ENCODE measurements at regions of chr19 and their contacts with region 1.

Region 1: DNA sequence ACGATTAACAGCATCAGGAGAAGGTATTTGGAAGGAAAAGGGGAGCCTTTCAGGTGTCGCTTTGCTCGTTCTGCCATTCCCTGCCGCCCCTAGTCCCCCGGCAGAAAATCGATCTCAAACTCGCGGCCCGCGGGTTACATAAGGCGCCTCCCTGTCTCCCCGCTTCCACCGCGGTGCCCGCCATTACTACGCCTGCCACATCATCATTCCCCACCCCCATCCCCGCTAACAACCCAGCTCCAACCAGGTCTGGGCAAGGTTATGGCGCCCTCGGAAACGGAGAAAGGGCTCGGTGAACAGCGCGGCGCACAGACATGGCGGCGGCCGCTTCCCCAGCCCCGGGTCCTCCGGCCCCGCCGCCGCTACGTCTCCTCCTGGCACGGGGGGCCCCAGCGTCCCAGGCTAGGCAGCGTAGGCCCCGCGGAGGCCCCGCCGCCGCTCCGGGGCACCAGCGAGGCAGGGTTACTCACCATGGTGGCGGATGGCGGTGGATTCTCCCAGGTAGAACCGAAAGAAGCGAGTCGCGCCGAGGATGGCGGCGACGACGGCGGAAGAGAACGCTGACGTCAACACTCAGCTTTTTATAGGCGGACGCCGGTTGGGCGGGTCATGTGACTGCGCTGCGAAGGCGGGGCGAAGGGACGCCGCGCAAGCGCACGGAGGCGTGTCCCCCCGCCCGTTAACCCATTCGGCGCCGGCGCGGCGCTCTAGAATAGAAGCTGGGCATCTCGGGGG is at the start of gene EEF2:
- DNase-seq: peak; percentile 84 to 97 (median 92)
- ATAC-seq: peak; percentile 57 to 64
- H3K4me3 Mint-ChIP-seq: peak within 1 kb of the TSS; percentile 92 to 99 (median 97)
- H3K27ac Mint-ChIP-seq: peak within 1 kb of the TSS; percentile 92 to 98 (median 97)
- H3K4me1 Mint-ChIP-seq: peaks cover 14 to 67% (median 49%) of the 10 kb centered on the region in 4 donors
- H3K27me3 Mint-ChIP-seq: no peaks in the 10 kb centered on the region
- polyA plus RNA-seq, gene EEF2: 546 to 682 (median 600) TPM

Region 2: GRCh38 chr19:3914199-3914598 is 70.9 kb before region 1 on chr19:
- POLR2A ChIA-PET with region 1: no interaction called
- DNase-seq: no peak
- ATAC-seq: no peak
- H3K4me3 Mint-ChIP-seq: no peak overlapping the region
- H3K27ac Mint-ChIP-seq: no peak overlapping the region
- H3K4me1 Mint-ChIP-seq: no peaks in the 10 kb centered on the region
- H3K27me3 Mint-ChIP-seq: peaks cover 0 to 9% (median 7%) of the 10 kb centered on the region in 5 donors

Region 3: DNA sequence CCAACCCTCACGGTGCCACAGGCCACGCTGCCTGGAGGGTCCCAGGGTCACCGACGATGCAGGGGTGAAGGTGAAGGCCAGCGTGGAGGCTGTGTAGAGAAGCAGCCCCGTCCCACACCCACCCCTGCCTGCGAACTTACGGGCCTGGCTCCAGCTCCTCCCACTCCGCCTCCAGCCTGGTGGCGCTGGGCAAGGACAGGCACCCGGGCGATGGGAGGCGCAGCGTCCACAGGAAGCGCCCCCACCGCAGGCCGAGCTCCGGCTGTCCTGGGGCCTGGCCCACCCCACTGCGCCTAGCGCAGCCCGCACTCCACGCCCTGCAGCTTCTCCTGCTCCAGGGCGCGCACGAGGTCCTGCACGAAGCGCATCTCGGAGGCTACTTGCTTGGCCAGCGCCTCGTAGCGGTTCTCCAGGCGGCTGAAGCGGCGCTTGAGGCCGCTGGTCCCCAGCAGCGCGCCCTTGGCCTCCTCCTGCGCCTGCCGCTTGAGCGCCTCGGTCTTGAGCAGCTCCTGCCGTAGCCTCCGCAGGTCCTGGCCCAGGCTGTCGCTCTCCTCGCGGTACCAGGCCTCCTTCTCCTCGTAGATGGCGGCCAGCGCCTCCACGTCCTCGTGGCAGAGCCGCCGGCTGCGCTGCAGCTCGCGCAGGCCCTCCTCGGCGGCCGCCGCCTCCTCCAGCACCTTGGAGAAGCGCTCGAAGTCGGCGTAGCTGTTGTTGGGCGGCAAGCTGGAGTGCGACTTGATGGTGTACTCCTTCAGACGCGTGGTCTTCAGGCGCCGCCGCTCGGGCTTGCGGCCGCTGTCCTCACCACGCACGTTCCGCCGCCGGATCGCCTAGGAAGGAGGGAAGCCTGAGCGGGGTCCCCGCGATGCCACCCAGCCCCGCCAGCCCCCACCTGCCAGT is 26.0 kb before region 1 on chr19:
- POLR2A ChIA-PET with region 1: no interaction called
- DNase-seq: no peak
- ATAC-seq: no peak
- H3K4me3 Mint-ChIP-seq: no peak overlapping the region
- H3K27ac Mint-ChIP-seq: no peak overlapping the region
- H3K4me1 Mint-ChIP-seq: no peaks in the 10 kb centered on the region
- H3K27me3 Mint-ChIP-seq: no peaks in the 10 kb centered on the region

Region 4: DNA sequence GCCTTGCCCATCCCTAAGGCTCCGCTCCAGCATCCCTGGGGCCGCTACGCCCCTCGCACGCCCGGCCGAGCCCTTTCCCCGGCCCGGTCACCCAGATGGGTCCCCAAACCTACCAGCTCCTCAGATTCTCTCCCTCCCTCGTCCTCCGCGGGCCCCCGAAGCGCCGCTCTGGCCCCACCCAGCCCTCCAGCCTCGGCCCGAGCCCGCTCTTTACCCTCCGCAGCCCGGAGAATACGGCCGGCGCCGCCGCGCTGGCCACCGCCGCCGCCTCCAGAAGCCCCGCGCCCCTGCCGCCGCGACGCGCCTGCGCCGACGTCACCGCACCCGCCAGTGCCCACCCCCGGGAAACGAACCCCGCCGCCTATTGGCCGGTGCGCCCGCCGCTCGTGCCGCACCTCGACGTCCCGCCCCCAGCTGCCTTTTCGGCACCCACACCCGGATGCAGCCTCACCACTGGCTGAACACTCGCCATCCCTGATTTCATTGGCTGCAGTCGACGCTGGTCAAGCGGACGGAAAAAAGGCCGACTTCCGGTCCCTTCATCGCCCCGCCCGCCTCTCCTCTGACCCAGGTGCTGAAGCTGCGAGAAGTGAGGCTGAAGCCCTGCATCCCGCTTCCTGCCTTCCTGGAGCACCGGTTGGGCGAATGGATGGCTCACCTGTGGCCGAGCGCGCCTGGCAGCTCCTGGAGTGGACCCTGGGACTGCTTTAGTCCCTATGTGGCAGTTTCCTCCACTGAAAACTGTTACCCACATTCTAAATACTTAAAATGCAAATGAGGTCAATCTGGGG is 14.1 kb before region 1 on chr19 and contains the start of gene DAPK3:
- POLR2A ChIA-PET with region 1: interaction called, 41 read pairs
- DNase-seq: peak; percentile 79 to 92 (median 88)
- ATAC-seq: peak; percentile 89 to 91
- H3K4me3 Mint-ChIP-seq: peak within 1 kb of the TSS; percentile 83 to 93 (median 88)
- H3K27ac Mint-ChIP-seq: peak within 1 kb of the TSS; percentile 60 to 96 (median 90)
- H3K4me1 Mint-ChIP-seq: peaks cover 16 to 38% (median 23%) of the 10 kb centered on the region in 4 donors
- H3K27me3 Mint-ChIP-seq: no peaks in the 10 kb centered on the region
- polyA plus RNA-seq, gene DAPK3: 17.7 to 27.7 (median 24.1) TPM

Measured in naive thymus-derived CD8-positive, alpha-beta T cell (primary cell).